Pancreas (tissue), 10 donors: ENCODE measurements at regions of chr6 and their contacts with region 1.

Region 1: DNA sequence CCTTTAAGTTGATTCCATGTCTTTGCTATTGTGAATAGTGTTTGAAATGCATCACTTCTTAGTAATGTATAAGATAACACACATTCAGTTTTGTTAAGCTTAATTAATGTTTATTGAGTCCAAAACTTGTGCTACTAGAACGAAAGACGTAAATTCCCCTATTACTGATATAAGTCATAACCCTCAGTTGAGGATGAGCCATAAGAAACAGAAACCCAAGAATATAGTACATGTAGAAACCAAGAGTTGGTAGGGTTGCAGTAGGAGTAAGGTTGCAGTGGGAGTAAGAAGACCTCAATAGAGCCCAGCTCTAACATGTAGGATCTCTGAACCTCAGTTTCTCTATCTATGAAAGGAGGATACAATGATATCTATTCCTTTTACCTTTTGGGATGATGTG is 19.3 kb downstream of the CITED2 start:
- DNase-seq: no peak
- ATAC-seq: no peak
- H3K4me3 ChIP-seq: no peak overlapping the region
- H3K27ac ChIP-seq: no peak overlapping the region
- H3K4me1 ChIP-seq: no peaks in the 10 kb centered on the region
- H3K27me3 ChIP-seq: no peaks in the 10 kb centered on the region
- CTCF ChIP-seq: no peak

Region 2: DNA sequence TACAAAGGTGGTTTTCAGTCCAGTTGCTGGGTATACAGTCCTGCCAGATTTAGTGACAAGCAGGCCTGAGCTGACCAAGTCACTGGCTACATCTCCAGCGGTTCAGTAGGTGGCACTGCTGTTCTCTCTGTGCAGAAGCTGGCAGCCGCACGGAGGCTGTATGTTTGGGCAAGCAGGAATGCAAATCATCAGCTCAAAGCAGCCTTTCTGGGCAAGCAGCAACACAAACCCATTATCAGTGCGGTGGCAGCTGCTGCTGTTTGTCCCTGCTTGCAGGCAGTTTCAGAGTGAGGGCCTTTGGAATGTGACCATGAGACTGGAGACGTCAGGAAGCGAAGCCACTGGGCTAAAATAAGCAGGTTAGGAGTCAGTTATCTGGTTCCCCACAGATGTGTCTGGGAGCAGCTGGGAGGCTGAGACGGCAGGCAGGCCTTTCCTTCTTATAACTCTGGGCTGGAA is 135.9 kb before region 1 on chr6:
- intact Hi-C with region 1: loop called in 2 of 3 experiments (anchors 10 kb)
- DNase-seq: peak; percentile 71 to 90 (median 81)
- ATAC-seq: peak; percentile 100
- H3K4me3 ChIP-seq: no peak overlapping the region
- H3K27ac ChIP-seq: peak overlapping the region in 2 of 4 donors; percentile 40 to 55
- H3K4me1 ChIP-seq: no peaks in the 10 kb centered on the region
- H3K27me3 ChIP-seq: no peaks in the 10 kb centered on the region
- CTCF ChIP-seq: peak; percentile 10 to 60 (median 52)

Region 3: DNA sequence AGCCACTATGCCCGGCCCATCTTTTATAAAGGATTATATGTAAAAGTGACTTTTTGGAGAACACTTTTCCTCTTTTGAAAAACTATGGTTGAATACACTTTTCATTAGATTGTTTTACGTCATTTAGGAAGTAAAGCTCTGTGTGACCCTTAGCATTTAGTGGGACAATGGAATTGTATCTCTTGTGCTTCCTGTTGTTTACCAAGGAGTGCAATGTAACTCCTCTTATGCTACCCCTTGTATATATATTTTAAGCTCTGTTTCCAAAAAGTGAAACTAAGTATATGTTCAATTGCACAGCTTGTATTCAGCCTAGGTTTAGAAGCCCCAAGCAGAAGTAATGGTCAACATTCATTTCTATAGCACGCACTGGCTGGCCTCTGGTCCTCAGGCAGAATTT is 202.4 kb after region 1 on chr6:
- intact Hi-C with region 1: no loop called
- DNase-seq: no peak
- ATAC-seq: no peak
- H3K4me3 ChIP-seq: no peak overlapping the region
- H3K27ac ChIP-seq: no peak overlapping the region
- H3K4me1 ChIP-seq: peaks cover 0 to 6% (median 4%) of the 10 kb centered on the region in 3 donors
- H3K27me3 ChIP-seq: no peaks in the 10 kb centered on the region
- CTCF ChIP-seq: no peak

Region 4: GRCh38 chr6:139778688-139779087 is 423.5 kb after region 1 on chr6:
- intact Hi-C with region 1: no loop called
- DNase-seq: no peak
- ATAC-seq: peak; percentile 44 to 71 (median 62)
- H3K4me3 ChIP-seq: no peak overlapping the region
- H3K27ac ChIP-seq: no peak overlapping the region
- H3K4me1 ChIP-seq: peaks cover 6 to 18% (median 6%) of the 10 kb centered on the region in 3 donors
- H3K27me3 ChIP-seq: no peaks in the 10 kb centered on the region
- CTCF ChIP-seq: no peak